K562 (cell line): ENCODE measurements at regions of chr4 and their contacts with region 1.

Region 1: GRCh38 chr4:114386637-114387233 is 211.9 kb upstream of the UGT8 start:
- DNase-seq: peak in 2 of 4 experiments; percentile 9 to 18
- ATAC-seq: peak; percentile 35; the same call in 1 of the 3 replicates
- H3K4me3 ChIP-seq: no peak overlapping the region
- H3K27ac ChIP-seq: no peak overlapping the region
- H3K4me1 ChIP-seq: no peaks in the 10 kb centered on the region
- H3K27me3 ChIP-seq: no peaks in the 10 kb centered on the region
- CTCF ChIP-seq: peak; percentile 24 to 69 (median 27); a peak in 3 of 6 replicates
- EP300 ChIP-seq: no peak
- POLR2A ChIP-seq: no peak
- RAD21 ChIP-seq: peak; percentile 62 to 79

Region 2: GRCh38 chr4:113278324-113278934 is 1108.3 kb before region 1 on chr4:
- CTCF ChIA-PET with region 1: no interaction called
- POLR2A ChIA-PET with region 1: no interaction called
- in situ Hi-C with region 1: no loop called
- intact Hi-C with region 1: loop called (anchors 10 kb)
- DNase-seq: peak; percentile 48 to 70 (median 52)
- ATAC-seq: peak; percentile 88
- H3K4me3 ChIP-seq: no peak overlapping the region
- H3K27ac ChIP-seq: no peak overlapping the region
- H3K4me1 ChIP-seq: no peaks in the 10 kb centered on the region
- H3K27me3 ChIP-seq: no peaks in the 10 kb centered on the region
- CTCF ChIP-seq: peak; percentile 53 to 68 (median 54)
- EP300 ChIP-seq: no peak
- POLR2A ChIP-seq: no peak
- RAD21 ChIP-seq: peak; percentile 21 to 37; a peak in 2 of 4 replicates

Region 3: GRCh38 chr4:113394730-113395530 is 991.8 kb before region 1 on chr4:
- CTCF ChIA-PET with region 1: no interaction called
- POLR2A ChIA-PET with region 1: no interaction called
- in situ Hi-C with region 1: loop called (anchors 25 kb)
- intact Hi-C with region 1: loop called (anchors 2 kb)
- DNase-seq: peak; percentile 35 to 76 (median 56)
- ATAC-seq: peak; percentile 96
- H3K4me3 ChIP-seq: no peak overlapping the region
- H3K27ac ChIP-seq: no peak overlapping the region
- H3K4me1 ChIP-seq: no peaks in the 10 kb centered on the region
- H3K27me3 ChIP-seq: no peaks in the 10 kb centered on the region
- CTCF ChIP-seq: peak; percentile 61 to 74 (median 71)
- EP300 ChIP-seq: no peak
- POLR2A ChIP-seq: no peak
- RAD21 ChIP-seq: peak; percentile 63 to 75

Region 4: GRCh38 chr4:113411496-113411938 is 975.2 kb before region 1 on chr4:
- CTCF ChIA-PET with region 1: no interaction called
- POLR2A ChIA-PET with region 1: no interaction called
- in situ Hi-C with region 1: loop called (anchors 25 kb)
- intact Hi-C with region 1: no loop called
- DNase-seq: no peak
- ATAC-seq: no peak
- H3K4me3 ChIP-seq: no peak overlapping the region
- H3K27ac ChIP-seq: no peak overlapping the region
- H3K4me1 ChIP-seq: no peaks in the 10 kb centered on the region
- H3K27me3 ChIP-seq: no peaks in the 10 kb centered on the region
- CTCF ChIP-seq: no peak
- EP300 ChIP-seq: no peak
- POLR2A ChIP-seq: no peak
- RAD21 ChIP-seq: no peak

Region 5: DNA sequence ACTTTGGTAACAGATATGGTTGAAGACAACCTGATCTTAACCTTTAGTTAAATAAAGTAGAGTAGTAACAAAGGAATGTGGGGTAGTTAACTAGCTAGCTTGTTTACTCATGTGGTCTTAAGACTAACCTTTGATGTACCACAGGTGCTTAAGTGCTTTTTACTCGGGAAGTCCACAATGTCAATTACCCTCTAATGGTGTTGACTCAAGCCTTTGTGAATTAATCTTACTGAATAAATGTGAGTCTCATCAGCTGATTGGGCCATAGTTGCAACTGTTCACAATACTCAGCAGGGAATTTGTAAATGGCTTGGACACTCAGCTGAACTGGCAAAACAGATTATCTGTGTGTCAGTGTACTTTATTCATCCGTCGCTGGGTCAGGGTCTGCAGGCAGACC is 92.9 kb after region 1 on chr4:
- CTCF ChIA-PET with region 1: no interaction called
- POLR2A ChIA-PET with region 1: no interaction called
- in situ Hi-C with region 1: no loop called
- intact Hi-C with region 1: no loop called
- DNase-seq: no peak
- ATAC-seq: no peak
- H3K4me3 ChIP-seq: no peak overlapping the region
- H3K27ac ChIP-seq: no peak overlapping the region
- H3K4me1 ChIP-seq: no peaks in the 10 kb centered on the region
- H3K27me3 ChIP-seq: no peaks in the 10 kb centered on the region
- CTCF ChIP-seq: no peak
- EP300 ChIP-seq: no peak
- POLR2A ChIP-seq: no peak
- RAD21 ChIP-seq: no peak

Region 6: DNA sequence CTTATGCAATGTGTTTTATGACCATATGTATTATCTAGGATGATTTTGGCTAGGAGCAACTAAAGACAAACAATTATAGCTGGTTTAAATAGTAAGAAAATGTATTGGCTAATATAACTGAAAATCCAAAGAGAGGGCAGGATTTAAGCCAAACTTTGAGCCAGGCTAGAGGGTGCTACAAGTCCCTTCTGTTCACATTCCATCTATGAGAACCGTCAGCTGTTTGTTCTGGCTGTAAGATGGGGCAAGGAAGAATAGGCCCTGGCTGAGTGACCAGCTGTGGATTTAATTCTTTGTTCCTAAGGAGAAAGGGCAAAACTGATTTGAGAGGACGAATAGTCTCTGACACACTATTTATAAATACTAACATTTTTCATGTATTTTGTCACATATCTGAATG is 132.6 kb after region 1 on chr4:
- CTCF ChIA-PET with region 1: no interaction called
- POLR2A ChIA-PET with region 1: no interaction called
- in situ Hi-C with region 1: no loop called
- intact Hi-C with region 1: no loop called
- DNase-seq: no peak
- ATAC-seq: no peak
- H3K4me3 ChIP-seq: no peak overlapping the region
- H3K27ac ChIP-seq: no peak overlapping the region
- H3K4me1 ChIP-seq: no peaks in the 10 kb centered on the region
- H3K27me3 ChIP-seq: no peaks in the 10 kb centered on the region
- CTCF ChIP-seq: no peak
- EP300 ChIP-seq: no peak
- POLR2A ChIP-seq: no peak
- RAD21 ChIP-seq: no peak

Region 7: DNA sequence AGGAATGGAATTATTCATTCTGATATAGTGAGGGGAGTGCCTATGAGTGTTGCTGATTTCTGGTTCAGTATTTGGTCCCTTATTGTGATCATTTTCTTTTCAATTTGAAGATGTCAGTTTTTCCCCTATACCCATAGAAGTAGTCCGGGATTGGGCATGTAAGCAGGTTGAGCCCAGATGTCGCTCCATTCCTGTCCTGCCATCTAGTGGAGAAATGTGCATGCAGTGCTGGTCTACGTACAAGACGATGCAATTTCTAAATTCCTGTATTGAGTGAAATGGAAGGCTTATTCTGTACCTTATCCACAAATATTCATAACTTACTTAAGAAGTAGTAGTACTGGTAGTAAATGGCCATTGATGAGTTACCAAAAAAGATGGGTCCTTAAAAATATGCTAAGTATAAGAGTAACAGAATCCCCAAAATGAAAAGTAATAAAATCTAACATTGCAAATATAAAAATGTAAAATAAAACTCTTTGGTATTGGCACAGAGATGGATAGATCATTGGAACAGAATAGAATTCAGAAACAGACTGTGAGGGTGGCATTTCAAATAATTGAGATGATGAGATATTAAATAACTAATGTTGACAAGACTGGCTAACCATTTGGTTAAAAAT is 272.8 kb after region 1 on chr4:
- CTCF ChIA-PET with region 1: interaction called, 4 read pairs
- POLR2A ChIA-PET with region 1: no interaction called
- in situ Hi-C with region 1: no loop called
- intact Hi-C with region 1: loop called (anchors 2 kb)
- DNase-seq: peak; percentile 23 to 59 (median 30)
- ATAC-seq: peak; percentile 92
- H3K4me3 ChIP-seq: no peak overlapping the region
- H3K27ac ChIP-seq: no peak overlapping the region
- H3K4me1 ChIP-seq: no peaks in the 10 kb centered on the region
- H3K27me3 ChIP-seq: no peaks in the 10 kb centered on the region
- CTCF ChIP-seq: peak; percentile 36 to 57 (median 56)
- EP300 ChIP-seq: no peak
- POLR2A ChIP-seq: no peak
- RAD21 ChIP-seq: peak; percentile 34 to 46; a peak in 3 of 4 replicates

Region 8: DNA sequence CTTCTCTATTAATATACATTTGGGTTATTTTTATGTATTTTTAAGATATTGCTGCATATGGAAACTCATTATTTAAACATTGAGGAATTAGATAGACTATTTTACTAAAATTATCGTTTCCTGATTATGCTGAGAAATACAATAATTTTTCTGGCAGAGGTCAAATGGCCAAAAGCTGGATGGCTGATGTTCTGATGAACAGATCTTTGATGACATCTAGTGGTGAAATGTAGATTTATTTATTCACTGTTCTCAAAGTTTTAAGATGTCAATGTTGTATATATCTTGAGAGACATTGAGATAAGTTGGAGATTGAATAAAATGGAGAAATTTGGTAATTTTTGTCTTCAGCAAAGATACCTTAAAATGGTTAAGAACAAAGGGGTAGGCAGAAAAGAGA is 308.0 kb after region 1 on chr4:
- CTCF ChIA-PET with region 1: interaction called, 17 read pairs
- POLR2A ChIA-PET with region 1: no interaction called
- in situ Hi-C with region 1: no loop called
- intact Hi-C with region 1: loop called (anchors 1 kb)
- DNase-seq: peak; percentile 5 to 37 (median 16)
- ATAC-seq: no peak
- H3K4me3 ChIP-seq: no peak overlapping the region
- H3K27ac ChIP-seq: no peak overlapping the region
- H3K4me1 ChIP-seq: no peaks in the 10 kb centered on the region
- H3K27me3 ChIP-seq: no peaks in the 10 kb centered on the region
- CTCF ChIP-seq: peak in 1 of 3 experiments; percentile 56; a peak in 2 of 6 replicates
- EP300 ChIP-seq: no peak
- POLR2A ChIP-seq: no peak
- RAD21 ChIP-seq: peak; percentile 63 to 68

Region 9: DNA sequence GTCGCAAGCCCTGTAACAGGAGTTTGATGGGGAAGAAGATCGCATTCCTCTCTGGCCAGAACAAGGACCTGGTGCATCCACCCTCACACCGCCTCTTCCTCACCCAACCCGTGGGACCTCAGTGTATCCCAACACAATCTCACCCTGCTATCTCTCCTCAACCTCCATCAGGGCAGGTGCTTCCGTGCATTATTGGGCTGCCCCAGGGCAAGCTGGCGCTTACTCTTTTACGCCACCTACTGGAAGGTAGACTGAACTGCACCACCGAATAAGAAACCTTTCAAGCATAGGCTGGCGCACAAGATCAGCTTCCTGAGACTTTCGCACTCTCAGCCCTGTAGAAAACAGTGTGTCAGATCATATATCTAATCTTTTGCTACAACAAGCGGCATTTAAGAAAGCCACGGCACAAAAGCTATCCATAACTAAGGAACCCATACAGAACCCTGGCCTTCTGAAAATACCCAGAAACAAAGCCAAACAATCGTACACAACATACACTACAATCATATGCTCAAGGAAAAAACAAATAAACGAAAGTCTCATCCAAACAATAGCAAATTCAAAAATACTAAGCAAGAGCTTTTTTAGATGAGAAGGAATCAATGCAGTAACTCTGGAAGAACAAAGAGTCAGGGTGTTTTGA is 421.1 kb after region 1 on chr4:
- CTCF ChIA-PET with region 1: no interaction called
- POLR2A ChIA-PET with region 1: no interaction called
- in situ Hi-C with region 1: no loop called
- intact Hi-C with region 1: loop called (anchors 2 kb)
- DNase-seq: peak; percentile 41 to 62 (median 48)
- ATAC-seq: peak; percentile 87
- H3K4me3 ChIP-seq: no peak overlapping the region
- H3K27ac ChIP-seq: no peak overlapping the region
- H3K4me1 ChIP-seq: no peaks in the 10 kb centered on the region
- H3K27me3 ChIP-seq: no peaks in the 10 kb centered on the region
- CTCF ChIP-seq: peak; percentile 58 to 73 (median 61)
- EP300 ChIP-seq: no peak
- POLR2A ChIP-seq: no peak
- RAD21 ChIP-seq: peak in 1 of 2 experiments; percentile 39; a peak in 1 of 4 replicates

Region 10: GRCh38 chr4:115054839-115055238 is 668.1 kb after region 1 on chr4:
- CTCF ChIA-PET with region 1: no interaction called
- POLR2A ChIA-PET with region 1: no interaction called
- in situ Hi-C with region 1: no loop called
- intact Hi-C with region 1: no loop called
- DNase-seq: no peak
- ATAC-seq: no peak
- H3K4me3 ChIP-seq: no peak overlapping the region
- H3K27ac ChIP-seq: no peak overlapping the region
- H3K4me1 ChIP-seq: no peaks in the 10 kb centered on the region
- H3K27me3 ChIP-seq: no peaks in the 10 kb centered on the region
- CTCF ChIP-seq: no peak
- EP300 ChIP-seq: no peak
- POLR2A ChIP-seq: no peak
- RAD21 ChIP-seq: no peak